ENCODE measurements at regions of chr17 and their contacts with region 1.

Region 1: GRCh38 chr17:55641676-55642081 is 81.0 kb downstream of the TMEM100 start:
- DNase-seq: peak; percentile 48 to 75
- ATAC-seq: peak in 7 of 8 donors; percentile 58 to 88 (median 80)
- H3K4me3 ChIP-seq: no peak overlapping the region
- H3K27ac ChIP-seq: no peak overlapping the region
- H3K4me1 ChIP-seq: peaks cover 0 to 12% (median 0%) of the 10 kb centered on the region in 9 donors
- H3K27me3 ChIP-seq: peaks cover 0 to 79% (median 10%) of the 10 kb centered on the region in 7 donors
- CTCF ChIP-seq: peak; percentile 35 to 76 (median 65)

Region 2: GRCh38 chr17:55607731-55608341 is 33.8 kb before region 1 on chr17:
- intact Hi-C with region 1: loop called in 1 of 10 experiments (anchors 5 kb)
- DNase-seq: peak; percentile 40 to 50
- ATAC-seq: peak in 3 of 8 donors; percentile 65 to 74 (median 65)
- H3K4me3 ChIP-seq: no peak overlapping the region
- H3K27ac ChIP-seq: no peak overlapping the region
- H3K4me1 ChIP-seq: peaks cover 0 to 20% (median 8%) of the 10 kb centered on the region in 9 donors
- H3K27me3 ChIP-seq: peaks cover 0 to 8% (median 0%) of the 10 kb centered on the region in 7 donors
- CTCF ChIP-seq: no peak

Measured in heart right ventricle (tissue), 16 donors.